ENCODE measurements at regions of chr11 and their contacts with region 1.

Region 1: GRCh38 chr11:45089676-45090499 is 56.6 kb upstream of the PRDM11 start:
- DNase-seq: peak; percentile 37
- ATAC-seq: peak; percentile 10
- H3K4me3 ChIP-seq: no peak overlapping the region
- H3K27ac ChIP-seq: peak overlapping the region; percentile 94
- H3K4me1 ChIP-seq: peaks cover 39% of the 10 kb centered on the region
- H3K27me3 ChIP-seq: peaks cover 2% of the 10 kb centered on the region; the same call in 1 of the 2 replicates
- CTCF ChIP-seq: peak; percentile 35; the same call in 1 of the 2 replicates
- POLR2A ChIP-seq: no peak
- RAD21 ChIP-seq: no peak

Region 2: GRCh38 chr11:44950625-44951476 is 139.0 kb before region 1 on chr11 and contains the start of gene TP53I11:
- CTCF ChIA-PET with region 1: no interaction called
- POLR2A ChIA-PET with region 1: no interaction called
- dilution Hi-C with region 1: no loop called
- in situ Hi-C with region 1: no loop called
- intact Hi-C with region 1: loop called (anchors 5 kb)
- DNase-seq: peak; percentile 60
- ATAC-seq: peak; percentile 84
- H3K4me3 ChIP-seq: peak within 1 kb of the TSS; percentile 95
- H3K27ac ChIP-seq: peak within 1 kb of the TSS; percentile 87
- H3K4me1 ChIP-seq: peaks cover 11% of the 10 kb centered on the region
- H3K27me3 ChIP-seq: no peaks in the 10 kb centered on the region
- CTCF ChIP-seq: peak; percentile 60
- POLR2A ChIP-seq: no peak
- RAD21 ChIP-seq: no peak
- total RNA-seq, gene TP53I11: 3.9 TPM in 2 replicates

Region 3: DNA sequence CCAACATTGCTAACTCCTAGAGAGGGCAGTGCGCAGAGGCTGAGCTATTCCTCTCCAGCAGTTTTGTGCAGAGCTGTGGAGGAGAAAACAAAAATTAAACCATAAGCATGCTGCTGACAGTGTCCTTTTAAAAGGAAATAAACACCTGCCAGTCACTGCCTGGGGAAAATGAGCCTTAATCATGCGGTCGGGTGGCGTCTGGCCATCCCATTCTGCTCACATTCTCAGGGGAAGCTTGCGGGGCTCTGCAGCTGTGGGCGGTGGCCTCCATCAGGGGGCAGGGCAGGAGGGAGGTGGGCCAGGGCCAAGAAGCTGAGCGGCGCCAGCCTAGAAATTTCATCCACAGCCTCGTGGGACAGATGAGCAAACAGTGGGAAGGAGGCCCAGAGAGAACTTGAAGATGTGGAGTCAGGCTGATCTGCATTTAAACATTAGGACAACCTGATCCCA is 68.2 kb before region 1 on chr11:
- CTCF ChIA-PET with region 1: no interaction called
- POLR2A ChIA-PET with region 1: no interaction called
- dilution Hi-C with region 1: no loop called
- in situ Hi-C with region 1: no loop called
- intact Hi-C with region 1: loop called (anchors 2 kb)
- DNase-seq: peak; percentile 16
- ATAC-seq: peak; percentile 69
- H3K4me3 ChIP-seq: no peak overlapping the region
- H3K27ac ChIP-seq: peak overlapping the region; percentile 59; the same call in 1 of the 2 replicates
- H3K4me1 ChIP-seq: peaks cover 16% of the 10 kb centered on the region; the same call in 1 of the 2 replicates
- H3K27me3 ChIP-seq: peaks cover 5% of the 10 kb centered on the region
- CTCF ChIP-seq: no peak
- POLR2A ChIP-seq: no peak
- RAD21 ChIP-seq: no peak

Region 4: DNA sequence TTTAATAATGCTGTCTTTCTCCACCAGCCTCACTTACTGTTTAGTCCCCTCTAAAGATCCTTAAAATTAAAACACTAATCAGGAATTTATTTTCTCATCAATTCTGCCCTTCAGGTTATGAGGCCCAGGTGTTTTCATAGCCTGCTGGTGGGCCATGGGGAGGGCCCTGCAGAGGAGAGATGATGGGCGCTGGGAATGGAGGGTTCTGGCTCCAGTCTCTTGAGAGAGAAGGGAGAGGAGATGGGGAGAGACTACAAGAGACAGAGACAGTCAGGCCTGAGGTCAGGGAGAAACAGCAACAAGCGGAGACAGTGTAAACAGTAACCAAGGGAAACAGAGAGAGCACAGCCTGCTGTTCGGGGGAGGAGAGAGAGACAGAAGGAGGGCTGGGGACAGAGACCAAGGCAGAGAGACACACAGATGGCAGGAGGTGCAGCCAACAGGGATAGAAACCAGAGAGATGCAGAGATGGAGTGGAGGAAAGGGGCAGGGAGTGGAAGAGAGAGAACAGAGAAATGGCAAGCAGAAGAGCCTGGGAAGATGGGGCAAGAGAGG is 383.5 kb after region 1 on chr11:
- CTCF ChIA-PET with region 1: no interaction called
- POLR2A ChIA-PET with region 1: no interaction called
- dilution Hi-C with region 1: no loop called
- in situ Hi-C with region 1: no loop called
- intact Hi-C with region 1: no loop called
- DNase-seq: no peak
- ATAC-seq: no peak
- H3K4me3 ChIP-seq: no peak overlapping the region
- H3K27ac ChIP-seq: no peak overlapping the region
- H3K4me1 ChIP-seq: no peaks in the 10 kb centered on the region
- H3K27me3 ChIP-seq: peaks cover 3% of the 10 kb centered on the region; the same call in 1 of the 2 replicates
- CTCF ChIP-seq: no peak
- POLR2A ChIP-seq: no peak
- RAD21 ChIP-seq: no peak

Measured in IMR-90 (cell line).